ENCODE measurements at regions of chr12 and their contacts with region 1.

Region 1: DNA sequence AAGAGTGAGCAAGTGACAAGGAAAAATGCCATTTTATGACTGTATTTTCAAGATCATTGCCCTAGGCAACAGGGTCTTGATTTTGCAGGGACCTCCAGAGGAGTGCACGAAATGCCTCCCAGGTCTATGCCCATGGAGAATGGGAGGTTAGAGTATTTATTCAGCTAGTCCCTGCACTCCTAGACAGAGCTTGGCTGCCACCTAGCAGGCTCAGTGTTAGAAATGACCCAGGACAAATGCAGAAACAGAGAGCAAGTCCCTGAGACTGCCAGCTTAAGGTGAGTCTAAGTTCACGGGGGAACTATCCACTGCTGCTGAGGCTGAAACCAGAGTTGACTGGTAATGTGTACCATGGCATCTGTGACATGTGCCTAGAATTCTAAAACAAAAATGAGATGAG is 506.4 kb downstream of the MED13L start:
- DNase-seq: no peak
- ATAC-seq: no peak
- H3K4me3 ChIP-seq: no peak overlapping the region
- H3K27ac ChIP-seq: no peak overlapping the region
- H3K4me1 ChIP-seq: no peaks in the 10 kb centered on the region
- H3K27me3 ChIP-seq: no peaks in the 10 kb centered on the region

Region 2: GRCh38 chr12:114662512-114663177 is 1108.4 kb before region 1 on chr12:
- intact Hi-C with region 1: loop called in 1 of 4 experiments (anchors 5 kb)
- DNase-seq: peak; percentile 73 to 91 (median 83)
- ATAC-seq: peak; percentile 38 to 43
- H3K4me3 ChIP-seq: no peak overlapping the region
- H3K27ac ChIP-seq: no peak overlapping the region
- H3K4me1 ChIP-seq: no peaks in the 10 kb centered on the region
- H3K27me3 ChIP-seq: no peaks in the 10 kb centered on the region

Region 3: DNA sequence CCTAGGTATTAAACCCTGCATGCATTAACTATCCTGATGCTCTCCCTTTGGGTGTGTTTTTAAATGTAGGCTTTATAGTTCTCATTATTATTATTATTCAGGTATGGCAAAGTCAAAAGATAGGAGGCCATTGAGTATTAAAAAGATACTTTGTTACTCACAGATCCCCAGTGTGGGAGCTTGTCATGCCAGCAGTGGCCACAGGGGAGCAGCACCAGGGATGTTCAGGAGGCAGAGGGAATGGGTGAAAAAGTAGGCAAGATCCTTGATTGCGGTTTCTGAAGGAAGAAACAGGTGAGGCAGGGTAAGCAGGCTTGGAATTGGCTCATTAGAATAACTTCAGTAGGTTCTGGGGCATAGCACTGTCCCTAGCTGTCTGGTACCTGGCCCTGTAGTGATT is 124.2 kb after region 1 on chr12:
- intact Hi-C with region 1: loop called in 1 of 4 experiments (anchors 10 kb)
- DNase-seq: no peak
- ATAC-seq: no peak
- H3K4me3 ChIP-seq: no peak overlapping the region
- H3K27ac ChIP-seq: no peak overlapping the region
- H3K4me1 ChIP-seq: no peaks in the 10 kb centered on the region
- H3K27me3 ChIP-seq: no peaks in the 10 kb centered on the region

Region 4: DNA sequence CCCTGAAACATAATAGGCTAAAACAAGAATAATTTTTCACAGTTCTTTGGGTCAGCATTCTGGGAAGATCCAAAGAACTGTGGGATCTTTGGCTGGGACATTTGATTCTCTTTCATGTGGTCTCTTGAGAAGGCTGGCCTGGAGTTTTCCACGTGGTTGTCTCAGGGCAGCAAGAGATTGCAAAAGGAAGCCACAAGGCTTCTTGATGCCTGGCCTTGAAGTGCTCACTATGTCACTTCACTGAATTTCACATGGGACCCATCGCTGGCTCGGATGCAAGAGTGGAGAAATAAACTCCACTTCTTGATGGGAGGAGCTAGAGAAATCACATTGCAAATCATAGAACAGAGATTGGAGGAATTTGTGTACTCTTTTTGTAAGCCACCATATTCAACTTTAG is 163.0 kb after region 1 on chr12:
- intact Hi-C with region 1: no loop called
- DNase-seq: peak in 2 of 3 donors; percentile 30 to 62
- ATAC-seq: peak in 1 of 2 donors; percentile 52
- H3K4me3 ChIP-seq: no peak overlapping the region
- H3K27ac ChIP-seq: no peak overlapping the region
- H3K4me1 ChIP-seq: no peaks in the 10 kb centered on the region
- H3K27me3 ChIP-seq: no peaks in the 10 kb centered on the region